ENCODE measurements at regions of chr11 and their contacts with region 1.

Region 1: GRCh38 chr11:65180877-65181568 is 705 bp upstream of the CAPN1 start:
- DNase-seq: peak; percentile 51 to 84 (median 64)
- ATAC-seq: peak; percentile 21 to 68 (median 56)
- H3K4me3 ChIP-seq: peak overlapping the region; percentile 65 to 98 (median 80)
- H3K27ac ChIP-seq: peak overlapping the region; percentile 73 to 98 (median 93)
- H3K4me1 ChIP-seq: peaks cover 0 to 30% (median 12%) of the 10 kb centered on the region in 12 donors
- H3K27me3 ChIP-seq: no peaks in the 10 kb centered on the region
- CTCF ChIP-seq: peak; percentile 27 to 58 (median 45)
- POLR2A ChIP-seq: peak in 1 of 2 donors; percentile 64

Region 2: DNA sequence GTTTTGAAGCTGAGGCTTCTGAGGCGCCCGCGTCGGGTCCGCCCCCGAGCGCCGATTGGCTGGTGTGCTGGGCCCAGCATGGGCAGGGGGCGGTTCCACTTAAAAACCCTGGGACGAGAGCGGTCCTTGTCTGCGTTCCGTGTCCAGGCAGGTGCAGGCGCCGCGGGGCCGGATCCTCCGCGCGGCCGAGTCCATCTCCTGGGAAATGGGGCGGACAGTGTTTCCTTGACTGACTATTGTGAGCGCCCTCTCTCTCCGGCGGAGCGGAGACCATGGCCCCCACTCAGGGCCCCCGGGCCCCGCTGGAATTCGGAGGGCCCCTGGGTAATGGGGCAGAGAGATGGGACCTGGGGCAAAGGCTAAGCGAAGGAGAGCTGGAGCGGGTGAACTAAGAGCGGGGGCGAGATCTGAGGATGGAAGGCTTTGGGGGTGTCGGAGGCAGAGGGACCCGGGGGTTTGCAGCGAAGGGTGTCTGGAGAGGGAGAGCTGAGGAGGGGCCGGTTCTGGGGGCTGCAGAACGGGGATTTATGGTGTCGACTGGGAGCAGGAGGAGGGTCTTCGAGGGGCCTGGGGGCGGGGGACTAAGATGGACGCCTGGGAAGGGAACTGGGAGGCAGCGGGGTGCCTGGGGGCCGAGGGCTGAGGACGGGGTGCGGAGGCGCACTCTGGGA is 69.1 kb before region 1 on chr11 and contains the start of gene TM7SF2:
- intact Hi-C with region 1: loop called in 5 of 10 experiments (anchors 2 to 10 kb)
- DNase-seq: peak; percentile 96 to 98 (median 97)
- ATAC-seq: peak; percentile 85 to 93 (median 86)
- H3K4me3 ChIP-seq: peak within 1 kb of the TSS; percentile 38 to 90 (median 61)
- H3K27ac ChIP-seq: peak within 1 kb of the TSS in 11 of 12 donors; percentile 52 to 86 (median 79)
- H3K4me1 ChIP-seq: peaks cover 0 to 62% (median 43%) of the 10 kb centered on the region in 12 donors
- H3K27me3 ChIP-seq: peaks cover 0 to 5% (median 0%) of the 10 kb centered on the region in 9 donors
- CTCF ChIP-seq: no peak
- POLR2A ChIP-seq: peak; percentile 73 to 96
- total RNA-seq, gene TM7SF2: 25.1 to 752 (median 78.6) TPM

Region 3: DNA sequence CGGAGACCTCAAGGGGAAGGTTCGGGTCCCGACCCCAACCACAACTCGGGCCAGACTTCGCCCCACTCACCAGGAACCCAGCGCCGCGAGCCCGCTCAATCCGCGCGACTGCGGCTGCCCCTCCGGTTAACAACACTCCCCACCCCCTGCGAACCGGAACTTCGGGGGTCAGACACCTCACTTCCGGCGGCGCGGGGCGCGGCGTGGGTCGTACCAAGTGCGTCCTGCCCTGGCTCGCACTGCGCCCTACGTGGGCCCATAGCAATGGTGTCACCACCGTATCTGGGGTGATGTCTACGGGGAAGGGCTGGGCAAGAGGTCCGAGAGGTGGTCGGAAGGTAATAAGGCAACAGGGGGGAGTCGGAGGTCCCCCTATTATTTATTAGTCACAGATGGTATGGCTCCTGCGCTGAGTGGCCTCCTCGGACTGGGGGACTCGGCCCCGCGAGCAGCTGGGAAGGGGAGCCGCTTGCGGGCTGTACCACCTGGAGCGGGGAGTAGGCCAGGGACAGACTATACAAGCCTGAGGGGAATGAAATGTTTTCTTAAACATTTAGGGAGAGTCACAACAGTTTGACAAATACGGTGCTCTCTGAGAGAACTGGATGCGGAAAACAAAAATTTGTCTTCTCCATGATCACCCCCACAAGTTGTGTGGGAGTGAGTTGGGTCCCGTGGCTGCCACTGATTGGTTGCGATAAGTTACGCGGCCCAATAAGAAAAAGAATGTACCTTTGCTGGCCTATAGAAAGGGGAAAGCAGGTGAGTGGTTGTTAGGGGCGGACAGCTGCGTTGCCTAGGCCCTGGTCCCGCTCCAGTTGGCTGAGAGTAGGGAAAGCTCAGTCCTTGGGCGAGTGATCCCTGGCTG is 46.4 kb before region 1 on chr11 and contains the start of gene SYVN1:
- intact Hi-C with region 1: loop called in 6 of 10 experiments (anchors 2 to 5 kb)
- DNase-seq: peak; percentile 91 to 95 (median 93)
- ATAC-seq: peak; percentile 90 to 95 (median 92)
- H3K4me3 ChIP-seq: peak within 1 kb of the TSS; percentile 63 to 98 (median 89)
- H3K27ac ChIP-seq: peak within 1 kb of the TSS; percentile 94 to 99 (median 98)
- H3K4me1 ChIP-seq: peaks cover 0 to 34% (median 26%) of the 10 kb centered on the region in 12 donors
- H3K27me3 ChIP-seq: no peaks in the 10 kb centered on the region
- CTCF ChIP-seq: no peak
- POLR2A ChIP-seq: peak; percentile 57 to 85
- total RNA-seq, gene SYVN1: 21.7 to 65.8 (median 28.2) TPM

Measured in heart left ventricle (tissue), 16 donors.